ENCODE measurements at regions of chr2 and their contacts with region 1.

Region 1: GRCh38 chr2:143259368-143259958 is 130.2 kb downstream of the ARHGAP15 start:
- DNase-seq: peak; percentile 71 to 78 (median 74)
- H3K4me3 ChIP-seq: peak overlapping the region; percentile 7 to 40
- H3K4me3 Mint-ChIP-seq: peak overlapping the region; percentile 74 to 87 (median 84)
- H3K27ac ChIP-seq: peak overlapping the region; percentile 56
- H3K27ac Mint-ChIP-seq: peak overlapping the region; percentile 73 to 99 (median 86)
- H3K4me1 ChIP-seq: peaks cover 98% of the 10 kb centered on the region
- H3K4me1 Mint-ChIP-seq: peaks cover 59 to 78% (median 70%) of the 10 kb centered on the region in 4 donors
- H3K27me3 ChIP-seq: no peaks in the 10 kb centered on the region
- H3K27me3 Mint-ChIP-seq: no peaks in the 10 kb centered on the region

Region 2: DNA sequence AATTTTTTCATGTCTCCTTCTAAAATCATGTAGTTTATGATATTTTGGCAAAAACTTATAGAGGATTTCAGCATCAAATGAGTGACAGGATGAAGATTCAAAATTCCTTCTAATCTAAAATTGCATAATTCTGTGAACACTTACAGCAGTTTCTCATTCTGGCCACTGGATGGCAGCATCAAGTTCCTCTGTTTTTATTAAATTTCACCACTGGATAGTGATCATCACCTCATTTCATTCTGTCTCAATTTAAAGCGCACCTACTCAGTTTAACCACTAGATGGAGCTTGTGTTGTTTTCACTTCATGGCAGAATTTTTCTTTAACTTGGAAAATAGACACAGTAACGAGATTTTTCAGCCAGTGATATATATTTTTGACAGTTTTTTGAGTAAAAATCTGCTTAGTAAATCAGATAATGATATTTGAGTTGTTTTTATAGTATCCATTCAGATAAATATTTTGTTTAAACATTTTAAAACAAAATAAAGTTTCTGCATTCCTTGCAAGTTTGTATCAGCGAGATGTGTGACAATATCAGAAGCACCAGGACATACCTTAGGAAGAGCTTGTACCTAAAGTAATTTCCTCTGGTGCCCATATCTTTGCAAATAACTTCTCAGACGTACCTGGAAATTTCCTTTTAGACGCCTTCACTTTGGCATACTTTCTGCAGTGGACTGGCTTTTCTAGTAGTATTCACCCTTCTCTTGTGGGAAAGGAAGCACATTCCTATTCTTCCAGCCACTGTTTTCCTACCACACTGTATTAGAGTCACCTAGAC is 225.0 kb before region 1 on chr2:
- CTCF ChIA-PET with region 1: interaction called, 16 read pairs
- POLR2A ChIA-PET with region 1: no interaction called
- intact Hi-C with region 1: loop called (anchors 1 kb)
- DNase-seq: peak; percentile 58 to 83 (median 77)
- H3K4me3 ChIP-seq: no peak overlapping the region
- H3K4me3 Mint-ChIP-seq: no peak overlapping the region
- H3K27ac ChIP-seq: no peak overlapping the region
- H3K27ac Mint-ChIP-seq: no peak overlapping the region
- H3K4me1 ChIP-seq: no peaks in the 10 kb centered on the region
- H3K4me1 Mint-ChIP-seq: peaks cover 0 to 4% (median under 1%) of the 10 kb centered on the region in 4 donors
- H3K27me3 ChIP-seq: no peaks in the 10 kb centered on the region
- H3K27me3 Mint-ChIP-seq: peaks cover 0 to 4% of the 10 kb centered on the region in 2 donors

Region 3: GRCh38 chr2:143128681-143129580 is 130.5 kb before region 1 on chr2 and contains the start of gene ARHGAP15:
- CTCF ChIA-PET with region 1: interaction called, 21 read pairs
- POLR2A ChIA-PET with region 1: interaction called, 96 read pairs
- intact Hi-C with region 1: loop called (anchors 1 kb)
- DNase-seq: peak; percentile 80 to 90 (median 84)
- H3K4me3 ChIP-seq: peak within 1 kb of the TSS; percentile 64 to 87
- H3K4me3 Mint-ChIP-seq: peak within 1 kb of the TSS; percentile 79 to 92 (median 89)
- H3K27ac ChIP-seq: peak within 1 kb of the TSS; percentile 70
- H3K27ac Mint-ChIP-seq: peak within 1 kb of the TSS; percentile 73 to 98 (median 96)
- H3K4me1 ChIP-seq: peaks cover 76% of the 10 kb centered on the region
- H3K4me1 Mint-ChIP-seq: peaks cover 31 to 42% (median 34%) of the 10 kb centered on the region in 4 donors
- H3K27me3 ChIP-seq: no peaks in the 10 kb centered on the region
- H3K27me3 Mint-ChIP-seq: no peaks in the 10 kb centered on the region
- total RNA-seq, gene ARHGAP15: 218 to 225 TPM

Region 4: DNA sequence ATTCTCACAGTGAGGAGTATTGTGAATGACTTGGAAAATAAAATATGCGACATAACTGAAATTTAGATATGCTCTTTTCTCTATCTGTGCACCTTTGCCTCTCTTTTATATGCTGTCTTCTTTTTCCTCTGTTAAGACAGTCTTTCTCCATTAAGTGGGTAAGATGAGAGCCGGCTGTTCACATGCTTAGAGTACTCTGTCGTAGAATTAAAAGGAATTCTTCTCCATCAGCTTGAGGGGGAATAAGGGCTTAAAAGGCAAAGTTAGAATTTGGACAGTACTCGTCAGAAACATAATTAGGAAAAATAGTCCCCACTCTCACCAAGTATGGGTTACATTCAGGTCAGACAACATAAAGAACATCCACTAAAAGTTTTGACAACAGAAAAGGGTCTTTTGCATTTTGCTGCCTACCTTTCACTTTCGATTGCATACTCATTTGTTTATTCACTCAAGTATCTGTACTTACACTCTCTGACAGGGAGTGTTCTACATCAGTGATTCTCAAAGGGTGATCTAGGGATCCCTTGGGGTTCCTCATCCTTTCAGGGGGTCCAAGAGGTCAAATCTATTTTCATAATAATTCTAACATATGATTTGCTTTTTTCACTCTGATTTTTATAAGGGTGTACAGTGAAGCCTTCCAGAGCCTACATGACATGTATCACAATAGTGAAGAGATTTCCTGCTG is 82.2 kb before region 1 on chr2:
- CTCF ChIA-PET with region 1: interaction called, 17 read pairs
- POLR2A ChIA-PET with region 1: interaction called, 12 read pairs
- intact Hi-C with region 1: no loop called
- DNase-seq: peak in 3 of 5 donors; percentile 16 to 18 (median 18)
- H3K4me3 ChIP-seq: peak overlapping the region in 1 of 2 donors; percentile 34
- H3K4me3 Mint-ChIP-seq: peak overlapping the region; percentile 77 to 93 (median 86)
- H3K27ac ChIP-seq: peak overlapping the region; percentile 66
- H3K27ac Mint-ChIP-seq: peak overlapping the region; percentile 90 to 97 (median 94)
- H3K4me1 ChIP-seq: peaks cover 57% of the 10 kb centered on the region
- H3K4me1 Mint-ChIP-seq: peaks cover 47 to 66% (median 57%) of the 10 kb centered on the region in 4 donors
- H3K27me3 ChIP-seq: no peaks in the 10 kb centered on the region
- H3K27me3 Mint-ChIP-seq: no peaks in the 10 kb centered on the region

Region 5: GRCh38 chr2:143217512-143218115 is 41.8 kb before region 1 on chr2:
- CTCF ChIA-PET with region 1: interaction called, 112 read pairs
- POLR2A ChIA-PET with region 1: interaction called, 46 read pairs
- intact Hi-C with region 1: loop called (anchors 1 kb)
- DNase-seq: no peak
- H3K4me3 ChIP-seq: no peak overlapping the region
- H3K4me3 Mint-ChIP-seq: peak overlapping the region in 2 of 8 donors; percentile 9 to 24
- H3K27ac ChIP-seq: no peak overlapping the region
- H3K27ac Mint-ChIP-seq: peak overlapping the region; percentile 42 to 83 (median 70)
- H3K4me1 ChIP-seq: peaks cover 37% of the 10 kb centered on the region
- H3K4me1 Mint-ChIP-seq: peaks cover 42 to 61% (median 51%) of the 10 kb centered on the region in 4 donors
- H3K27me3 ChIP-seq: no peaks in the 10 kb centered on the region
- H3K27me3 Mint-ChIP-seq: no peaks in the 10 kb centered on the region

Region 6: DNA sequence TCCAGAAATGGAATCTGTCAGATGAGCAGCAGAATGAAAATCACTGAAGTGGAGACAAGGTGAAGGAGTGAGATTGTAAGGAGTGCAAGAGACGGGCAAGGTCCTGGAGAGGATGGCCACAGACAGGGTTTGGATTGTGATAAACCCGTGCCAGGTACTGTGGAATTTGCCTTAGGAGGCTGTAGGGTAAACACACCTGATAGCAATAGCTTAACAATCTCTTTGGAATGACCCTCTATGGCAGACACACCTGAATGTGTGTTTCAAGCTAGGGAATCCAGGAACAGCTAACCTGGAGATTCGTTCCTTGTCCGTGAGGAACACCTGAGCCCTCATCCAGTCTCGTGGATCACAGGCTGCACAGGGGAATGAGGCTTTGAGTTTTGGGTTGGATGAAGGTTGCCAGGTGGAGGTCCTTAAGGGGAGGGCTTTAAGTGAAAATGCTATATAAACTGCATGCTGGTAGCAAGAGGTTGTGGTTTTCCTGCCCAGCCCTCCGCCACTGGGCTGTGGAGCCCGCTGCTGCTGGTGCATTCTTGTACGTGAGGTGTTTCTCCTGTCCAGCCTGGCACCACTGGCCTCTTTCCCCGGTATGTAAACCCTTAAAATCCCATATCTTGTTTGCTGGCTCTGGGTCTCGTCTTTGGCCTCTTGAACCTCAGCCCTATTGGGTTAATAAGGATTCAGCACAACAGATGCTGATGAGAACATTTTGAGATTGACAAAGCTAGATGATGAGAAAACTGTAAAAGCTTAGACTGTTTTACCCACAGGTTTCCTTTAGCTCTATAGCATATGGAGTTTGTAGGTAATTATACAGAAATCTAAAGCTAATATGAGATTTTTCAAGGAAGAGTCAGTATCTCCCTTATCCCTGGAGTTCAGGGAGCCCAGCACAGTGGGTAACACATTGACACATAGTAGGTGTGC is 12.4 kb before region 1 on chr2:
- CTCF ChIA-PET with region 1: interaction called, 37 read pairs
- POLR2A ChIA-PET with region 1: interaction called, 80 read pairs
- intact Hi-C with region 1: loop called (anchors 1 kb)
- DNase-seq: peak; percentile 44 to 59 (median 45)
- H3K4me3 ChIP-seq: peak overlapping the region; percentile 71 to 74
- H3K4me3 Mint-ChIP-seq: no peak overlapping the region
- H3K27ac ChIP-seq: peak overlapping the region; percentile 43
- H3K27ac Mint-ChIP-seq: peak overlapping the region in 1 of 7 donors; percentile 97
- H3K4me1 ChIP-seq: peaks cover 71% of the 10 kb centered on the region
- H3K4me1 Mint-ChIP-seq: peaks cover 20 to 31% (median 24%) of the 10 kb centered on the region in 4 donors
- H3K27me3 ChIP-seq: no peaks in the 10 kb centered on the region
- H3K27me3 Mint-ChIP-seq: no peaks in the 10 kb centered on the region

Measured in CD4-positive, alpha-beta memory T cell (primary cell).